ENCODE measurements at regions of chr19 and their contacts with region 1.

Region 1: GRCh38 chr19:10653715-10654492 is at the start of gene ILF3:
- DNase-seq: peak; percentile 100
- H3K4me3 ChIP-seq: peak within 1 kb of the TSS; percentile 92 to 94
- H3K4me3 Mint-ChIP-seq: peak within 1 kb of the TSS; percentile 93 to 98 (median 96)
- H3K27ac ChIP-seq: peak within 1 kb of the TSS; percentile 100
- H3K27ac Mint-ChIP-seq: peak within 1 kb of the TSS; percentile 98 to 100 (median 99)
- H3K4me1 ChIP-seq: peaks cover 57% of the 10 kb centered on the region
- H3K4me1 Mint-ChIP-seq: peaks cover 24 to 58% (median 39%) of the 10 kb centered on the region in 4 donors
- H3K27me3 ChIP-seq: no peaks in the 10 kb centered on the region
- H3K27me3 Mint-ChIP-seq: peaks cover 0 to 4% of the 10 kb centered on the region in 2 donors
- total RNA-seq, gene ILF3: 291 to 302 TPM

Region 2: DNA sequence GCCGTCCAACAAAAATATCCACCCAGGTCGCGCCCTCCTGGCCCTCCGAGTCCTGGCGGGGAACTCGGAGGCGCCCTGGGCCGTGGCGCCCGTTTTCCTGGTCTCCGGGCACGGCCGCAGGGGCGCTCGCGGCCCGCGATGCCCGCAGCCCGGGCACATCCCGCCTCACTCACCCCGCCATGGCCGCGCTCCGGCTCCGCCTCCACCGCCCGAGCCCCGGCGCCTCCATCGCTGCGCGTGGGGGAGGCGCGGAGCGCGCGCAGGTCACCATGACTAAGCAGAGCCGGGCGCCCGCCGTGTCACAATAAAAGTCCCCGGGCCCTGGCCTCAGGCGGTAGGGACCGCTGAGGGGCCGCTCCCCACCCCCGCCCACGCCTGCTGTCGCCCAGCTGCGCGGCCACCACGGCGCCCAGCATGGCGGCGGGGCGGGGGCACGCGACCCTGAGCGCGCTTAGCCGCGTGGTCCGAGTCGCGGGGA is 151.3 kb before region 1 on chr19:
- CTCF ChIA-PET with region 1: no interaction called
- POLR2A ChIA-PET with region 1: interaction called, 3 read pairs
- intact Hi-C with region 1: loop called (anchors 2 kb)
- DNase-seq: peak; percentile 83 to 88 (median 87)
- H3K4me3 ChIP-seq: peak overlapping the region; percentile 50 to 97
- H3K4me3 Mint-ChIP-seq: peak overlapping the region; percentile 84 to 90 (median 88)
- H3K27ac ChIP-seq: peak overlapping the region; percentile 87
- H3K27ac Mint-ChIP-seq: peak overlapping the region; percentile 81 to 94 (median 90)
- H3K4me1 ChIP-seq: peaks cover 47% of the 10 kb centered on the region
- H3K4me1 Mint-ChIP-seq: peaks cover 21 to 49% (median 35%) of the 10 kb centered on the region in 4 donors
- H3K27me3 ChIP-seq: no peaks in the 10 kb centered on the region
- H3K27me3 Mint-ChIP-seq: no peaks in the 10 kb centered on the region

Region 3: GRCh38 chr19:10580979-10581631 is 72.8 kb before region 1 on chr19:
- CTCF ChIA-PET with region 1: interaction called, 473 read pairs
- POLR2A ChIA-PET with region 1: interaction called, 4 read pairs
- intact Hi-C with region 1: no loop called
- DNase-seq: peak; percentile 84 to 88 (median 84)
- H3K4me3 ChIP-seq: no peak overlapping the region
- H3K4me3 Mint-ChIP-seq: peak overlapping the region in 4 of 8 donors; percentile 0 to 65 (median 30)
- H3K27ac ChIP-seq: no peak overlapping the region
- H3K27ac Mint-ChIP-seq: peak overlapping the region in 3 of 7 donors; percentile 4 to 26 (median 25)
- H3K4me1 ChIP-seq: peaks cover 22% of the 10 kb centered on the region
- H3K4me1 Mint-ChIP-seq: peaks cover 9 to 24% (median 16%) of the 10 kb centered on the region in 4 donors
- H3K27me3 ChIP-seq: no peaks in the 10 kb centered on the region
- H3K27me3 Mint-ChIP-seq: peaks cover 2% of the 10 kb centered on the region in 2 donors

Region 4: DNA sequence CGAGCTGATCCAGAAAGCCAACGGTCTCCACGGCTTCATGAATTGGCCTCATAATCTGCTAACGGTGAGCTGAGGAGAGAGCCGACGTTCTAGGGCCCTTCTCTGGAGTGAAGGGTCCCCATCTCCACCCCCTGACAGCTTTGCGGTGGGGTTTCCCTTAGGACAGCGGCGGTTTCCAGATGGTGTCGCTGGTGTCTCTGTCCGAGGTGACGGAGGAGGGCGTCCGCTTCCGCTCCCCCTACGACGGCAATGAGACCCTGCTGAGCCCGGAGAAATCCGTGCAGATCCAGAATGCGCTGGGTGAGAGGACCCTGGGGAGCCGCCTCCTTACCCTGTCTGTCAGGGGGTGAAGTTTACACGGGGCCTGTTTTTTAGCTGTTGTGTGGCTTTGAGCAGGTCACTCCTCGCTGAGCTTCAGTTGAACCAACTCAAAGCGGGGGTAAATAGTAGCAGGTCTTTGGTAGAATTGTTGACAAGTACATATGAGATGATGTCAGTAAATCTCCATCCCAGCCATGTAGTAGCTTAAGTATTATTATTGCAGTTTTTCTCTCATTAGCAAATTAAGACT is 48.1 kb after region 1 on chr19:
- CTCF ChIA-PET with region 1: interaction called, 16 read pairs
- POLR2A ChIA-PET with region 1: interaction called, 11 read pairs
- intact Hi-C with region 1: no loop called
- DNase-seq: peak in 1 of 5 donors; percentile 20
- H3K4me3 ChIP-seq: peak overlapping the region; percentile 93 to 96
- H3K4me3 Mint-ChIP-seq: peak overlapping the region; percentile 88 to 99 (median 94)
- H3K27ac ChIP-seq: peak overlapping the region; percentile 55
- H3K27ac Mint-ChIP-seq: peak overlapping the region; percentile 58 to 91 (median 84)
- H3K4me1 ChIP-seq: peaks cover 10% of the 10 kb centered on the region
- H3K4me1 Mint-ChIP-seq: peaks cover 4 to 21% (median 10%) of the 10 kb centered on the region in 4 donors
- H3K27me3 ChIP-seq: no peaks in the 10 kb centered on the region
- H3K27me3 Mint-ChIP-seq: peaks cover 0 to 10% of the 10 kb centered on the region in 2 donors

Region 5: DNA sequence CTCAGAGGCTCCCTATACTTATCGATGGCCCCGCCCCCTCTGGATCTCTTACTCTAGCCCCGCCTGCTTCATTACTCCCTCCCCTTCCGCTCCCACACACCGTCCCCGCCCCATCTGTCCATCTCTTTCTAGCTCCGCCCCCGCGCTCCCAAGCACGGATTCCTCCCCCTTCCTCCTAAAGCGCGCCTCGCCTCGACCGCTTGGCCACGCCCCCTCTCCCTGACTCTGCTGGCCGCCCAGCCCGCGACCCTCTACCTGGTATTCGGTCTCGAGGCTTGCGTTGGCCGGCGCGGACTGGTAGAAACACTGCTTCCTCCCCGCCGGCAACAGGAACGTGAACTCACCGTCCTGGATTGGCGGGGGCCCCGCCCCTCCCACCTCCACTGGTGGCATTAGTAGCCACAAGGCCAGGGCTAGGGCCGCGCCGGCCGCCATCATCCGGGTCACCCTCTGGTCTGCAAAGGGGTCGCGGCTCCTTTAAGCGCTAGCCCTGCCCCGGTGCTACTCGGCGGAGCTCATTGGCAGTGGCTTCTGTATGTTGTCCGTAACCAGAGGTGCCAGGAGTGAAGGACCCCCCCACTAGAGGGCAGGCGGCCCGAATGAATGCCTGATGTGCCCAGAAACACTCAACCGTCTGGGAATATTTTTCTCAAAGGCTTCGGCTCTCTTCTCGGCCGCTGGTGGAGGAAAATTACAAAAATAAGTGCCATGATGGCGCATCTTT is 182.0 kb after region 1 on chr19 and contains the start of gene TMED1:
- CTCF ChIA-PET with region 1: no interaction called
- POLR2A ChIA-PET with region 1: interaction called, 6 read pairs
- intact Hi-C with region 1: loop called (anchors 1 kb)
- DNase-seq: peak; percentile 94 to 95 (median 94)
- H3K4me3 ChIP-seq: peak within 1 kb of the TSS; percentile 64 to 89
- H3K4me3 Mint-ChIP-seq: peak within 1 kb of the TSS; percentile 96 to 100 (median 98)
- H3K27ac ChIP-seq: peak within 1 kb of the TSS; percentile 95
- H3K27ac Mint-ChIP-seq: peak within 1 kb of the TSS; percentile 99 to 100 (median 100)
- H3K4me1 ChIP-seq: peaks cover 17% of the 10 kb centered on the region
- H3K4me1 Mint-ChIP-seq: peaks cover 9 to 21% (median 13%) of the 10 kb centered on the region in 4 donors
- H3K27me3 ChIP-seq: no peaks in the 10 kb centered on the region
- H3K27me3 Mint-ChIP-seq: no peaks in the 10 kb centered on the region
- total RNA-seq, gene TMED1: 9.0 to 10.9 TPM

Region 6: DNA sequence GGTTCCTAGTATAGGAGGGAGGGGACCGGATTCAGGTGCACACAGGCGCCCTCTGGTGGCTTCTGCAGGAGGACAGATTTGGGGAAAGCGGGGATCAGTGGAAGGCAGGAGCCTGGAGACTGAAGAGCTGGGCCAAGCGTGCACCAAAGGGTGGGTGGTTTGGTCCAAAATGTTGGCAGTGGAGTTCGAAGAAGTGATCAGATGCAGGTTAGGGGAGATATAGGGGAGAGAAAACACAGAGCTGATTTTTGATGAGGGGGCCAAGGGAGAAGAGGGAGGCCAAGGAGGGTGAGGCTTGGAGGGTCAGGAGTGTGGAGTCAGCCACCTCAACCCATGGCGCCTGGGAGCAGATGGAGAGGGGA is 210.6 kb after region 1 on chr19:
- CTCF ChIA-PET with region 1: no interaction called
- POLR2A ChIA-PET with region 1: no interaction called
- intact Hi-C with region 1: no loop called
- DNase-seq: peak; percentile 72 to 76 (median 74)
- H3K4me3 ChIP-seq: no peak overlapping the region
- H3K4me3 Mint-ChIP-seq: peak overlapping the region in 3 of 8 donors; percentile 41 to 64 (median 59)
- H3K27ac ChIP-seq: no peak overlapping the region
- H3K27ac Mint-ChIP-seq: peak overlapping the region in 6 of 7 donors; percentile 3 to 87 (median 45)
- H3K4me1 ChIP-seq: peaks cover 9% of the 10 kb centered on the region
- H3K4me1 Mint-ChIP-seq: peaks cover 5 to 19% (median 14%) of the 10 kb centered on the region in 4 donors
- H3K27me3 ChIP-seq: no peaks in the 10 kb centered on the region
- H3K27me3 Mint-ChIP-seq: no peaks in the 10 kb centered on the region